Mammary epithelial cell (primary cell): ENCODE measurements at regions of chr2 and their contacts with region 1.

Region 1: GRCh38 chr2:196291873-196292800 is 120.8 kb upstream of the STK17B start:
- DNase-seq: peak; percentile 97
- H3K4me3 ChIP-seq: peak overlapping the region in 1 of 3 experiments; percentile 10
- H3K27ac ChIP-seq: peak overlapping the region; percentile 91
- H3K4me1 ChIP-seq: peaks cover 51% of the 10 kb centered on the region
- H3K27me3 ChIP-seq: no peaks in the 10 kb centered on the region
- CTCF ChIP-seq: no peak

Region 2: DNA sequence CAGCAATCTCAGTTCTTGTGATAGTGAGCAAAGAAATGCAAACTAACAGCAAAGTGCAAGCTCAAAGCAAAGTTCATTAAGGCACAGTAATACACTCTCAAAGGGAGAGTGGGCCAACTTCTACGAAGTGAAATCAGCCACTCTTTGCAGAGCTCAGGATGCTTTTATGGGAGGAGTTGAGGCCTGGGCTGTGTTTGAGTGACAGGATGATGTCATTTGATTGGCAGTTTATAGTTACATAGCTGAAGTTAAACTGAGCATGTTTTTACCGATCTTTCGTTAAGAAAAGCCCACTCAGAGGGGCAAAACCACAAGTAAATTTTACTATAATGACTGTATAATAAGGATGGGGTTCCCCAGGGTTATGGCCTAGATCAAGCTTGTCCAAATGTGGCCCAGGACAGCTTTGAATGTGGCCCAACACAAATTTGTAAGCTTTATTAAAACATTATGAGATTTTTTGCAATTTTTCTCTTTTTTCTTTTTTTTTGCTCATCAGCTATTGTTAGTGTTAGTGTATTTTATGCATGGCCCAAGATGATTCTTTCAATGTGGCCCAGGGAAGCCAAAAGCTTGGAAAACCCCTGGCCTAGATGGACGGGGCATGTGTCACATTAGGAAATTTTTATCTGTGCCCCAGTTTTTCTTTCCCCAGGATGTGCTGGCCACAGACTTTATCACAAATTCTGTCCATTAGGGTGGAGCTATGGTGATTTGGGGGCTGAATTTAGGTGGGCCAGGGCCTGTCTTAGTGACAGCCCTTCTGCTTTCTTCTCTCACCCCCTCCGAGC is 215.2 kb before region 1 on chr2:
- CTCF ChIA-PET with region 1: no interaction called
- dilution Hi-C with region 1: no loop called
- in situ Hi-C with region 1: loop called in 1 of 2 experiments (anchors 10 kb)
- intact Hi-C with region 1: loop called (anchors 5 kb)
- DNase-seq: no peak
- H3K4me3 ChIP-seq: no peak overlapping the region
- H3K27ac ChIP-seq: no peak overlapping the region
- H3K4me1 ChIP-seq: no peaks in the 10 kb centered on the region
- H3K27me3 ChIP-seq: no peaks in the 10 kb centered on the region
- CTCF ChIP-seq: no peak

Region 3: GRCh38 chr2:196088203-196088602 is 203.9 kb before region 1 on chr2:
- CTCF ChIA-PET with region 1: no interaction called
- dilution Hi-C with region 1: no loop called
- in situ Hi-C with region 1: loop called in 1 of 2 experiments (anchors 10 kb)
- intact Hi-C with region 1: no loop called
- DNase-seq: peak; percentile 39
- H3K4me3 ChIP-seq: no peak overlapping the region
- H3K27ac ChIP-seq: no peak overlapping the region
- H3K4me1 ChIP-seq: no peaks in the 10 kb centered on the region
- H3K27me3 ChIP-seq: no peaks in the 10 kb centered on the region
- CTCF ChIP-seq: no peak

Region 4: DNA sequence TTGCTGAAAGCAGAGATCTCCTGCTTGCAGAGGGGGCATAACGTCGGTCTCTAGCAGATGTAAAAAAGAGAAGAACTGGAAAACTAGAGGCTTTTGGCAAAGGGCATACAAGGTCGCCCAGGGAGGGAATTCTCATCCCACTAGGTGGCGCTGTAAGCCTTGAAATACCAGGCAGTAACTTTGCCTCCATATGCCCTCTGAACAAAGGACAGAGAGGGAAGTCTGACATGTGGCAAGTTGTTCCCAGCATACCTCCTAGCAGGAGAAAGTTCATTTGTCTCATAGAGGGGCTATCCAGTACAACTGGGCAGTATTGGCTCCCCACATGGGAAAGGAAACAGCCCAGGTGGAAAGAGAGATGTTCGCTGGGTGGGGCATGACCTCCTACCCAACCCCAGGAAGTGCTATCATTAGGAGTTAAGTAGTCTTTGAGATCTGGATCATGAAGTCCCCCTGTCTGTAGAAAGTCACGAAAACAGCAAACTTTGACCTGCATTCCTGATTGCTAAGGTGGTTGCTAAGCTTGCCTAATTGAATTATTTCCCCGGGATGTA is 160.7 kb before region 1 on chr2:
- CTCF ChIA-PET with region 1: no interaction called
- dilution Hi-C with region 1: no loop called
- in situ Hi-C with region 1: no loop called
- intact Hi-C with region 1: loop called (anchors 2 kb)
- DNase-seq: peak; percentile 35
- H3K4me3 ChIP-seq: no peak overlapping the region
- H3K27ac ChIP-seq: no peak overlapping the region
- H3K4me1 ChIP-seq: no peaks in the 10 kb centered on the region
- H3K27me3 ChIP-seq: no peaks in the 10 kb centered on the region
- CTCF ChIP-seq: peak; percentile 57 to 59

Region 5: DNA sequence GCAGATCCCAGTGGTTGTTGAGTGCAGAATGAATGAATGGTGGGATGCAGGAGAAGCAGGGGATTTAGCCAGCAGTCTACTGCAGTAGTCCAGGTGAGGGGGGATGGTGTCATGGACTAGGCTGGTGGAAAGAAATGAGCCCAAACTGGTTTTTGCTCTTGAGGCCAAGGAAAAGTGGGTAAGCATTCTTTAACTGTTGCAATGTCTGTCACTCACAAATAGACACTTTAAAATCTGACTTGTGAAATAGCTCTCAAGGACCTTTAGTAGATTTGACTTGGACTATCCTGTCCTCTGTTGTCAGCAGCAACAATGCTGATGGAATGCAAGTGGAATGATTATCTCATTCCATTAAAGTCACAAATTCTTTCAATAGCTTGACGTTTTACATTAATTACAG is 83.2 kb before region 1 on chr2:
- CTCF ChIA-PET with region 1: interaction called, 11 read pairs
- dilution Hi-C with region 1: no loop called
- in situ Hi-C with region 1: no loop called
- intact Hi-C with region 1: no loop called
- DNase-seq: no peak
- H3K4me3 ChIP-seq: no peak overlapping the region
- H3K27ac ChIP-seq: no peak overlapping the region
- H3K4me1 ChIP-seq: peaks cover 6% of the 10 kb centered on the region
- H3K27me3 ChIP-seq: no peaks in the 10 kb centered on the region
- CTCF ChIP-seq: no peak

Region 6: DNA sequence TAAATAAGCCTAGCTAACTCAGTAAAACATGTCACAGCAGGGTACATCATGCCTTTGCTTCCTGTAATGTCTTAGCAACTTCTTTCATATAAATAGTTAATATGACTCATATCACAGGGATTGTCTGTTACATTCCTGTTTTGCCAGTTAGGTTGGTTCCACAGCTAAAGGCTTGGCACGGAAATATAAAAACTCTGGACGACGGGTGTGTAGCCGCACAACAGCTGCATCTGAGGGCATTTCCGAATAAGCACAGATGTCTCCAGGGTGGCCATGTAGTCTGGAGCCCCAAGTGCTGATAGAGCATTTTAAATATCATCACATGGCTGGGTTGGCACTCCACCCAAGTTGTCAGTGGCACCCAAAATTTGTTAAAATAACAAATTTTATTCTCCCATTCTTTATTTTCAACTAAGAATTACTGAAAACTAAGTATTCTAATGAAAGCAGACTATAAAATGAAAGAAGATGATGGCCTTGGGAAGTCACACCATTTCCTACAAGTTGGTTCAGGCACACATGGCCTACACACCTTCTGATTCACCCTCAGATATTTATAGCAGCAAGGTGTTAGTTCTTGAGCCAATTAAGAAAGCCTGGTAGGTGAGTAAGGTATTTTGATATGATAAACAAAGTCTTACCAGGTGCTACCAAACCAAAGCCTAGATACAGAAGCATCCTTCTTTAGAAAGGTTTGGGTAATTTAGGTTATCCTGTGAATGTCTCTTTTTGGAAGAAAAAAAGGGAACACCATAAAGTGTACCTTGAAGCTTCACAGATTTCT is 58.9 kb before region 1 on chr2:
- CTCF ChIA-PET with region 1: no interaction called
- dilution Hi-C with region 1: loop called (anchors 5 kb)
- in situ Hi-C with region 1: no loop called
- intact Hi-C with region 1: loop called (anchors 2 kb)
- DNase-seq: peak; percentile 95
- H3K4me3 ChIP-seq: peak overlapping the region in 2 of 3 experiments; percentile 6 to 15
- H3K27ac ChIP-seq: peak overlapping the region; percentile 97
- H3K4me1 ChIP-seq: peaks cover 37% of the 10 kb centered on the region
- H3K27me3 ChIP-seq: no peaks in the 10 kb centered on the region
- CTCF ChIP-seq: no peak

Region 7: DNA sequence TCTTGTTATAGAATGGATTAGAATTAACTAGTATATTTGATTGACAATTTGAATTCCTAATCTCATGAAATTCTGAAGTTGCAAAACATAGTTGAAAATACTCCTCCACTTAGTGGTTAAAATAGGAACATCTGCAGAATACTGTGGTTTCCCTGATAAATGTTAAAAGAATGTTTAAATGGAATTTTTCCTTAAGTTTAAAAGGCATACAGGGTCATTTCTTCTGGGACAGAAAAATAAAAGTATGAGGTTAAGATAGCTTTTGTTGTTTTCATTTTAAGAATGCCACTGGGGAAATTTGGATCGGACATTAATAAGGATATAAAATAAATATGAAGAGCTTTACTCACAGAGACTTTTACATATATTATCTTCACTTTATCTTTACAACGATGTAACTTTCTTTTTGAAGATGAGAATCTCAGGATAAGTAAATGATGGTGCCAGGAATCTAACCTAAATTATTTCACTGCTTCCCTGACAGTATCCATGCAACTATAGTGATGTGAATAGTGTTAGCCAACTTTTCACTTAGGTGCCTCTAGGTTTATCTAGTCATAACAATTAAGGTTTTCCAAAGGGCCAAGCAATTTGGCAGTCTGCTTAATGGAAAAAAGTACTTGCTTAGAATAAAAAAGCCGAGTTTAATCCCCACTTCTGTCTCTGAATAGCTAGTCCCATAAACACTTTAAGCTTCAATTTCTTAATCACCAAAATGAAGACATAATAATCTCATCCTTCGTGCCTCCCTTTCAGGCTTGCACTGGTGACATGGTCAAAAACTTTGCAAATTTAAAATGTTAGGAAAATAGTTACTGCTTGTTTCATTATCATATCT is 31.1 kb after region 1 on chr2:
- CTCF ChIA-PET with region 1: no interaction called
- dilution Hi-C with region 1: no loop called
- in situ Hi-C with region 1: no loop called
- intact Hi-C with region 1: no loop called
- DNase-seq: no peak
- H3K4me3 ChIP-seq: no peak overlapping the region
- H3K27ac ChIP-seq: no peak overlapping the region
- H3K4me1 ChIP-seq: no peaks in the 10 kb centered on the region
- H3K27me3 ChIP-seq: no peaks in the 10 kb centered on the region
- CTCF ChIP-seq: no peak

Region 8: GRCh38 chr2:196441527-196441926 is 149.4 kb after region 1 on chr2:
- CTCF ChIA-PET with region 1: no interaction called
- dilution Hi-C with region 1: no loop called
- in situ Hi-C with region 1: no loop called
- intact Hi-C with region 1: no loop called
- DNase-seq: no peak
- H3K4me3 ChIP-seq: no peak overlapping the region
- H3K27ac ChIP-seq: no peak overlapping the region
- H3K4me1 ChIP-seq: no peaks in the 10 kb centered on the region
- H3K27me3 ChIP-seq: peaks cover 2% of the 10 kb centered on the region
- CTCF ChIP-seq: no peak

Region 9: GRCh38 chr2:196639180-196640030 is 347.3 kb after region 1 on chr2 and contains the start of gene CCDC150:
- CTCF ChIA-PET with region 1: no interaction called
- dilution Hi-C with region 1: no loop called
- in situ Hi-C with region 1: no loop called
- intact Hi-C with region 1: loop called (anchors 10 kb)
- DNase-seq: peak; percentile 92
- H3K4me3 ChIP-seq: peak within 1 kb of the TSS; percentile 82 to 93 (median 87)
- H3K27ac ChIP-seq: peak within 1 kb of the TSS; percentile 60
- H3K4me1 ChIP-seq: peaks cover 11% of the 10 kb centered on the region
- H3K27me3 ChIP-seq: no peaks in the 10 kb centered on the region
- CTCF ChIP-seq: peak in 1 of 2 donors; percentile 48
- total RNA-seq, gene CCDC150: 2.2 to 7.2 TPM